Endothelial cell of umbilical vein (primary cell): ENCODE measurements at regions of chr13 and their contacts with region 1.

Region 1: GRCh38 chr13:106680796-106681472 is 113.0 kb upstream of the ARGLU1 start:
- DNase-seq: peak; percentile 81
- H3K4me3 ChIP-seq: no peak overlapping the region
- H3K27ac ChIP-seq: peak overlapping the region; percentile 22
- H3K4me1 ChIP-seq: peaks cover 25% of the 10 kb centered on the region
- H3K27me3 ChIP-seq: no peaks in the 10 kb centered on the region
- CTCF ChIP-seq: no peak
- POLR2A ChIP-seq: no peak

Region 2: GRCh38 chr13:106651442-106651841 is 29.5 kb before region 1 on chr13:
- CTCF ChIA-PET with region 1: no interaction called
- POLR2A ChIA-PET with region 1: no interaction called
- dilution Hi-C with region 1: no loop called
- intact Hi-C with region 1: loop called (anchors 2 kb)
- DNase-seq: peak; percentile 80
- H3K4me3 ChIP-seq: no peak overlapping the region
- H3K27ac ChIP-seq: peak overlapping the region; percentile 63
- H3K4me1 ChIP-seq: peaks cover 13% of the 10 kb centered on the region
- H3K27me3 ChIP-seq: no peaks in the 10 kb centered on the region
- CTCF ChIP-seq: no peak
- POLR2A ChIP-seq: no peak

Region 3: GRCh38 chr13:106714271-106714982 is 33.5 kb after region 1 on chr13:
- CTCF ChIA-PET with region 1: no interaction called
- POLR2A ChIA-PET with region 1: no interaction called
- dilution Hi-C with region 1: no loop called
- intact Hi-C with region 1: no loop called
- DNase-seq: no peak
- H3K4me3 ChIP-seq: no peak overlapping the region
- H3K27ac ChIP-seq: no peak overlapping the region
- H3K4me1 ChIP-seq: no peaks in the 10 kb centered on the region
- H3K27me3 ChIP-seq: no peaks in the 10 kb centered on the region
- CTCF ChIP-seq: no peak
- POLR2A ChIP-seq: no peak